ENCODE measurements at regions of chr1 and their contacts with region 1.

Region 1: GRCh38 chr1:28602536-28603439 is 10.7 kb downstream of the RAB42 start:
- DNase-seq: peak in 6 of 14 experiments; percentile 11 to 65 (median 48)
- ATAC-seq: no peak
- H3K4me3 ChIP-seq: no peak overlapping the region
- H3K4me3 Mint-ChIP-seq: no peak overlapping the region
- H3K27ac ChIP-seq: no peak overlapping the region
- H3K27ac Mint-ChIP-seq: no peak overlapping the region
- H3K4me1 ChIP-seq: peaks cover 3% of the 10 kb centered on the region
- H3K4me1 Mint-ChIP-seq: no peaks in the 10 kb centered on the region
- H3K27me3 ChIP-seq: no peaks in the 10 kb centered on the region
- H3K27me3 Mint-ChIP-seq: no peaks in the 10 kb centered on the region
- CTCF ChIP-seq: peak; percentile 67

Region 2: DNA sequence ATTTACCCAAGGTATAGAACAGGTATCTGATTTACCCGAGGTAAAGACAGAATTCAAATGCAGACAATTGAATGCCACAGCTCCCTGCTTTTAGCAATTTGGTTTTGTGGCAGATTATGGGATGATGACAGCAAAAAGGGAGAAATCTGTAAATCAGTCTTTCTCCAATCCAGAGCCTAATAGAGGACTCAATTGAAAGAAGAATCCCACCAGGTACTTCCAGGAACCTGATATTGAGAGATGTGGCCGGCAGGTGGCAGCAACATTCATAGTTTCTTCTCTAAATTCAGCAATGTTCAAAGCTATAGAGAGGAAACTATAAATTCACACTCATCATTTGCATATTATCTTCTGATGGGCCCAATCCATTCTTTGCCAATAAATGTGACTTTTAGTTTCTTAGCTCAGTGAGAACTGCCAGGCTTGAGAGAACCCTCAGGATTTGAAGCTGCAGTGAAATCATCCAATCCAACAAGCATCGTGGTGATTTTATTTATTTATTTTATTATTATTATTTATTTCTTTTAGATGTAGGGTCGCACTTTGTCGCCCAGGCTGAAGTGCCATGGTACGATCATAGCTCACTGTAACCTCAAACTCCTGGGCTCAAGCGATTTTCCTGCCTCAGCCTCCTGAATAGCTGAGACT is 243.1 kb before region 1 on chr1:
- CTCF ChIA-PET with region 1: no interaction called
- POLR2A ChIA-PET with region 1: no interaction called
- intact Hi-C with region 1: loop called in 1 of 2 experiments (anchors 1 kb)
- DNase-seq: peak; percentile 54 to 83 (median 68)
- ATAC-seq: peak; percentile 75
- H3K4me3 ChIP-seq: no peak overlapping the region
- H3K4me3 Mint-ChIP-seq: no peak overlapping the region
- H3K27ac ChIP-seq: no peak overlapping the region
- H3K27ac Mint-ChIP-seq: no peak overlapping the region
- H3K4me1 ChIP-seq: no peaks in the 10 kb centered on the region
- H3K4me1 Mint-ChIP-seq: no peaks in the 10 kb centered on the region
- H3K27me3 ChIP-seq: no peaks in the 10 kb centered on the region
- H3K27me3 Mint-ChIP-seq: no peaks in the 10 kb centered on the region
- CTCF ChIP-seq: peak; percentile 85

Region 3: DNA sequence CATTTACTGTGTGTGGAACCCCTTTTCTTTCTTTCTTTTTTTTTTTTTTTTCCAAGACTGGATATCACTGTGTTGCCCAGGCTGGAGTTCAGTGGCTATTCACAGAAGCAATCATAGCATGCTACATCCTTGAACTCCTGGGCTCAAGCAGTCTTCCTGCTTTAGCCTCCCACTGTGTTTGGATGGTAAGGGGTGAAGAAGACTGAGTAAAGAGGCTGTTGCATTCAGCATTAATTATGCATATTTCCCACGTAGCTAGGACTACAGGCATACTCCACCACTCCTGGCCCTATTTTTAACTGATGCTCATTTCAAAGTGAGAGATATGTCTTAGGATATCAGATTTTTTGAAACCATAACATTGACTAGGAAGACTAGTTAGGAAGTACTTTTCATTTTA is 193.7 kb before region 1 on chr1:
- CTCF ChIA-PET with region 1: no interaction called
- POLR2A ChIA-PET with region 1: no interaction called
- intact Hi-C with region 1: loop called in 1 of 2 experiments (anchors 2 kb)
- DNase-seq: no peak
- ATAC-seq: no peak
- H3K4me3 ChIP-seq: no peak overlapping the region
- H3K4me3 Mint-ChIP-seq: no peak overlapping the region
- H3K27ac ChIP-seq: no peak overlapping the region
- H3K27ac Mint-ChIP-seq: no peak overlapping the region
- H3K4me1 ChIP-seq: peaks cover 4% of the 10 kb centered on the region
- H3K4me1 Mint-ChIP-seq: peaks cover 3% of the 10 kb centered on the region
- H3K27me3 ChIP-seq: no peaks in the 10 kb centered on the region
- H3K27me3 Mint-ChIP-seq: no peaks in the 10 kb centered on the region
- CTCF ChIP-seq: no peak

Region 4: DNA sequence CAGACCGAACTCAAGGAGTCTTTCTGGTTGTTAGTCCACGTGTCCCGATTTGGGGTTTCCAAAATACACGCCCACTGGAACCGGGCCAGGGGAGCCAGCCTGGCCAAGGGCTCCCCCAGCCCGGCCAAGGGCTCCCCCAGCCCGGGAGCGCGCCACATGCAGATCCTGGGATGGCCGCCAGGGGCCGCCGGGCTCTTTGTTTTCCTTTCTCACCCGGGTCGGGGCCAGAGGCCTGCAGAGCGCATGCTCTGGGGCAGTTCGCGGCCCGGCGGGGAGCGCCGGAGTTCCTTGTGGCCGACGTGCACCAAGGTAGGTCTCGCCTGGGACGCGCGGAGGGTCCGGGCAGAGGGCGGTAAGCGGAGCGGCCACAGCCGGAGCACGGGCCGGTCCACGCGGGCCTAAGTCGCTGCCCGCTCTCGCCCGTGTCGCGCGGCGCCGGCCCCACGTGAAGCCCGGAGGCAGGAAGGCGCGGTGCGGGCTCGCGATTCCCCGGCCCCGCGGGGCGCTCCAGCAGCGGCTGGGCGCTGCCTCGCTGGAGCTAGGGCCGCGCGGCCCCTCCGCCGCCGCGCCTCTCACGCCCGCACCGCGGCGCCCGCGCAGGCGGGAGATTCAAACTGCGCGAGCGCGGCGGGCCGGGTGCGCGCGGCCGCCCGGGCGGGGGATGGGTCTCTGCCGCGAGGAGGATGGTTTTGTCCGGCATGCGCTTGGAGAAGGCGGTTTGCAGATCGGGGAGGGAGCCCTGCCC is 84.6 kb before region 1 on chr1:
- CTCF ChIA-PET with region 1: interaction called, 7 read pairs
- POLR2A ChIA-PET with region 1: interaction called, 4 read pairs
- intact Hi-C with region 1: loop called (anchors 1 to 5 kb)
- DNase-seq: peak; percentile 80 to 93 (median 86)
- ATAC-seq: peak; percentile 90
- H3K4me3 ChIP-seq: peak overlapping the region; percentile 66
- H3K4me3 Mint-ChIP-seq: peak overlapping the region; percentile 91
- H3K27ac ChIP-seq: peak overlapping the region; percentile 23 to 29
- H3K27ac Mint-ChIP-seq: peak overlapping the region; percentile 83
- H3K4me1 ChIP-seq: peaks cover 24% of the 10 kb centered on the region
- H3K4me1 Mint-ChIP-seq: peaks cover 33% of the 10 kb centered on the region
- H3K27me3 ChIP-seq: no peaks in the 10 kb centered on the region
- H3K27me3 Mint-ChIP-seq: no peaks in the 10 kb centered on the region
- CTCF ChIP-seq: peak; percentile 94

Measured in CD4-positive, alpha-beta T cell (primary cell).